Endothelial cell of umbilical vein (primary cell): ENCODE measurements at regions of chr20 and their contacts with region 1.

Region 1: DNA sequence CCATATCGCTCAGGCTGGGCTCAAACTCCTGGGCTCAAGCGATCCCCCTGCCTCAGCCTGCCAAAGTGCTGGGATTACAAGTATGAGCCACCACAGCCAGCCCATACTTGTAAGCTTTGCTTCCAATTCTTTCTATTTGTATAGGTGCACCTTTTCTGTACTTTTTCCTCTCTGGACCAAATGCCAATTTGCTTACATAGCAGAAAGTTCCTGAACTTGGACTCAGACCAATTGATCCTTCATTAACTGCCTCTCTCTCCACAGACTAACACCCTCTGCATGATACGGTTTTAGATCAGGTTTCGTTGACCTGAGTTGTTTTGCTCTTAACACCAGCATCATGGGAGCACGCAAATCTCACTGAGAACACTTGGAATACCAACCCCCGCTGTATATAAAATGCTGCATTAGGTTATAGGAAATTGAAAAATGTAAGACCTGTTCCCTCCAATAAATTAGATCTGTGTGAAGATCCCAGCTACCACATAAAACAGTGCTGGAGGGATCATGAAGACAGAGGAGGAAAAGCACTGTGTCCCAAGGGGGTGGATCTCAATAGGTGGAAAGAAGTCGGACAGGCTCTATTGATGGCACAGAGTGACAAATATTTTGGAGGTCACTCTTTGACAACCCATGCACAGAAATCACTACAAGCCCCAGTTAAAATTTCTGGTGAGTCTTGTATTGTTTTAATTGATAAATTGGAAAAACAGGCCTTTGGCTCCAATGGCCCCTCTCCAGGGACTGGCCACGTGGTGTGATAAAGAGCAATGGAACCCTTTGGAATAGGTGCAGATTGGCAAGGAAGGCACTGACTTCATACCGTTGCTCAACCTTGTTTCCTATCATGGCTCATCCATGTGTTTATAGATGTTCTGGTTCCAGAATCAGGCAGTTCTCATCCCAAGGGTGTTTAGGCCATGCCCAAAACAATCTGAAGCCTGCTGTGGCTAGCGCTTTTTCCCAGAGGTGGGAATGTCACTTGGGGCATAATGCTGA is 51.2 kb downstream of the ISM1 start:
- DNase-seq: no peak
- H3K4me3 ChIP-seq: no peak overlapping the region
- H3K27ac ChIP-seq: no peak overlapping the region
- H3K4me1 ChIP-seq: peaks cover 18% of the 10 kb centered on the region
- H3K27me3 ChIP-seq: peaks cover 0 to 13% of the 10 kb centered on the region in 2 experiments
- CTCF ChIP-seq: no peak
- POLR2A ChIP-seq: no peak

Region 2: DNA sequence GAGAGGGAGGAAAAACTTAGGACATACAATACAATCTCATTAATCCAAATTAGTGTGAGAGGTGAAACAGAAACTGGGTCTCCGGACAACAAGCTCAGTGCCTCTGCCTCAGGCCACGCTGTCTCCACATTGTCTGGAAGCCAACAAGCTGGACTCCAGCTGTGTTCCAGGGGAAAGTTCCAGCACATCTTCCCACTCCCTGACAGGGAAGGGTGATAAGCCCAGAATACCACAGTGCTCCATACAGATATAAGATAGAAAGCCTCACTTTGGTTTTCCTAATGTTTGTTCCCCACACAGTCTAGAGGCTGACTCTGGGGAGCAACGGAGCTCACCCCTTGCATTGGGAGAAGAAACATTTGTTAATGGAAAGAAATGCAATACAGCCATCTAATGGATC is 380.6 kb before region 1 on chr20:
- CTCF ChIA-PET with region 1: no interaction called
- POLR2A ChIA-PET with region 1: no interaction called
- dilution Hi-C with region 1: no loop called
- intact Hi-C with region 1: no loop called
- DNase-seq: no peak
- H3K4me3 ChIP-seq: no peak overlapping the region
- H3K27ac ChIP-seq: no peak overlapping the region
- H3K4me1 ChIP-seq: no peaks in the 10 kb centered on the region
- H3K27me3 ChIP-seq: no peaks in the 10 kb centered on the region
- CTCF ChIP-seq: no peak
- POLR2A ChIP-seq: no peak

Region 3: DNA sequence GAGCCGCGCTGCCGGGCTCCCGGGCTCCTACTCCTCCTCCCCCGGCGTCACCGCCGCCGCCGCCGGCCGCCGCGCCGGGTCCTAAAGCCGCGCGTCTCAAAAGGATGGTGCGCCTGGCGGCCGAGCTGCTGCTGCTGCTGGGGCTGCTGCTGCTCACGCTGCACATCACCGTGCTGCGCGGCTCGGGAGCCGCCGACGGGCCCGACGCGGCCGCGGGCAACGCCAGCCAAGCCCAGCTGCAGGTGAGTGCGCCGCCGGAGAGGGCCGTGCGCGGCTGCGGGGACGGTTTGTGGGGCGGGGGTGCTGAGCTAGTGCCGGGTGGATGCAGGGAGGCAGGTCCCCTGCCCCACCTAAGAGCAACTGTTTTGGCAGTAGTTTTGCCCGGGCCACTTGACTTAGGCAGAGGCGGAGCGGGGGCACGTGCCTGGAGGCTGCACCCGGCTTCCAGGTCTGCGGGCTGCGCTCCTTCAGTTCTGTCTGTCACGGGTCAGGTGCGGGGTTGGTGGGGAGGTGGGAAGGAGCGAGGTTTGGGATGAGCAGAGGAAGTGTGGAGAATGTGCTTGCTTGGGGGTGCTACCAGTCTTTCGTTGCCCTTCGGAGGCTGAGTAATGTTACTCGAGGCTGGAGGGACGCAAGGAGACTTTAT is 50.5 kb before region 1 on chr20:
- CTCF ChIA-PET with region 1: interaction called, 3 read pairs
- POLR2A ChIA-PET with region 1: interaction called, 3 read pairs
- dilution Hi-C with region 1: no loop called
- intact Hi-C with region 1: loop called (anchors 2 kb)
- DNase-seq: peak; percentile 32
- H3K4me3 ChIP-seq: peak overlapping the region in 1 of 3 experiments; percentile 24
- H3K27ac ChIP-seq: no peak overlapping the region
- H3K4me1 ChIP-seq: no peaks in the 10 kb centered on the region
- H3K27me3 ChIP-seq: peaks cover 46 to 78% of the 10 kb centered on the region in 2 experiments
- CTCF ChIP-seq: peak in 1 of 2 donors; percentile 10
- POLR2A ChIP-seq: no peak